Mucosa of descending colon (tissue), 3 donors: ENCODE measurements at regions of chr10 and their contacts with region 1.

Region 1: DNA sequence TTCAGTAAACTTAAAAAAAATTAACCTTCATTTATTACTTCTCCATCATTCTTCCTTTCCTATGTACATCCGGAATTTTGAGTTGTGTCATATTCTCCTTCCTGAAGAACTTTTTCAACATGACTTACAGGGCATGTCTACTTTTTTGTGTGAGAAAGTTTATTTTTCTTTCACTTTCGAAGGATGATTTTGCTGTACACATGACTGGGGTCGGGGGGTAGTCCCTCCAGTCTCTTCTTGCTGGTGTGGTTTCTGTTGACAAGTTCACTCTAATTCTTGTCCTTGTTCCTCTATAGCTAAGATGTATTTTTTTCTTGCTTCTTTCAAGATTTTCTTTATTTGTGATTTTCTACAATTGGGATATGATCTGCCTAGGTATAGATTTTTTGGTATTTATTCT is 55.8 kb downstream of the INPP5A start:
- DNase-seq: no peak
- ATAC-seq: no peak
- H3K4me3 ChIP-seq: no peak overlapping the region
- H3K4me1 ChIP-seq: peaks cover 51% of the 10 kb centered on the region
- CTCF ChIP-seq: no peak

Region 2: DNA sequence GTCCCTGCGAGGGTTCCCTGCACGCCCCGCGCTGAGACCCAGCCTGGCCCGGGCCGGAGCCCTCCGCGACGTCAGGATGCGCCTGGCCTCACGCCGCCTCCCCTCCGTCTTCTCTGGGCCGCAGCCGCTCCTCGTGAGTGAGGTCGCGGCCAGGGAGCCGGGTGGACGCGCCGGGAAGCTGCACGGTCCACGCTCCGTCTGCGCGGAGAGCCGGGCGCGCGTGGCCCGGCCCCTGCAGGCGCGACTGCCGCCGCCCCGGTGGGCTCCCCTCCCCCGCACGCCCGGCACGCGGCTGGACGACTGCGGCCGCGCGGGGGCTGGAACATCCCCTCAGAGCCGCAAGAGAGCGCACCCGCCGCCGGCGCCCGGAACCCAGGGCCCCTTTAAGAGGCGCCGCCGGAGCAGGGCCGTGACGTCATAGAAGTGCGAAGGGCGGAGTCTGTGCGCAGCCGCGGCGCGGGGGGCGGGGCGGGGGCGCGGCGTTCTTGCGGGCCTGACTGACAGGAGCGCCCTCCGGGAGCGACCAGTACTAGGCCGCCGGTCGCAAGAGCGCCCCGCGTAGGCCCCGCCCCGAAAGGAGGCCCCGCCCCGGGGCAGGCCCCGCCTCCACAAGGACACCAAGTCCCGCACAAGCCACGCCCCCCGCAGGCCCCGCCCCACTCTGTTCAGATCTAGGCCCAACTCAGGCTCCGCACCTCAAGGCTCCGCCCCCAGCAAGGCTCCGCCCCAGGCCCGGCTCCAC is 56.2 kb before region 1 on chr10:
- intact Hi-C with region 1: loop called in 1 of 2 experiments (anchors 10 kb)
- DNase-seq: peak; percentile 100
- ATAC-seq: peak; percentile 94
- H3K4me3 ChIP-seq: peak overlapping the region; percentile 38
- H3K4me1 ChIP-seq: peaks cover 31% of the 10 kb centered on the region
- CTCF ChIP-seq: peak; percentile 20